Caco-2 (cell line): ENCODE measurements at regions of chr20 and their contacts with region 1.

Region 1: GRCh38 chr20:33460711-33461110 is 17.1 kb upstream of the SNTA1 start:
- DNase-seq: no peak
- H3K4me3 ChIP-seq: no peak overlapping the region
- H3K4me3 Mint-ChIP-seq: no peak overlapping the region
- H3K27ac Mint-ChIP-seq: no peak overlapping the region
- H3K4me1 ChIP-seq: no peaks in the 10 kb centered on the region; the same call in 1 of the 2 replicates
- H3K4me1 Mint-ChIP-seq: no peaks in the 10 kb centered on the region
- H3K27me3 ChIP-seq: no peaks in the 10 kb centered on the region
- H3K27me3 Mint-ChIP-seq: no peaks in the 10 kb centered on the region
- CTCF ChIP-seq: no peak

Region 2: GRCh38 chr20:33217052-33217451 is 243.7 kb before region 1 on chr20 and contains the start of gene BPIFA3:
- CTCF ChIA-PET with region 1: no interaction called
- POLR2A ChIA-PET with region 1: no interaction called
- intact Hi-C with region 1: no loop called
- DNase-seq: no peak
- H3K4me3 ChIP-seq: no peak within 1 kb of the TSS
- H3K4me3 Mint-ChIP-seq: no peak within 1 kb of the TSS
- H3K27ac Mint-ChIP-seq: no peak within 1 kb of the TSS
- H3K4me1 ChIP-seq: no peaks in the 10 kb centered on the region
- H3K4me1 Mint-ChIP-seq: no peaks in the 10 kb centered on the region
- H3K27me3 ChIP-seq: no peaks in the 10 kb centered on the region; the same call in none of the 2 replicates
- H3K27me3 Mint-ChIP-seq: peaks cover 25% of the 10 kb centered on the region
- CTCF ChIP-seq: no peak
- total RNA-seq, gene BPIFA3: not detected in 2 replicates

Region 3: GRCh38 chr20:33489495-33490022 is 28.8 kb after region 1 on chr20:
- CTCF ChIA-PET with region 1: interaction called, 19 read pairs
- POLR2A ChIA-PET with region 1: interaction called, 6 read pairs
- intact Hi-C with region 1: no loop called
- DNase-seq: peak; percentile 100
- H3K4me3 ChIP-seq: peak overlapping the region; percentile 16
- H3K4me3 Mint-ChIP-seq: peak overlapping the region; percentile 92
- H3K27ac Mint-ChIP-seq: peak overlapping the region; percentile 38
- H3K4me1 ChIP-seq: peaks cover 14% of the 10 kb centered on the region
- H3K4me1 Mint-ChIP-seq: peaks cover 8% of the 10 kb centered on the region
- H3K27me3 ChIP-seq: no peaks in the 10 kb centered on the region
- H3K27me3 Mint-ChIP-seq: no peaks in the 10 kb centered on the region
- CTCF ChIP-seq: no peak

Region 4: GRCh38 chr20:33515569-33516216 is 55.0 kb after region 1 on chr20:
- CTCF ChIA-PET with region 1: interaction called, 4 read pairs
- POLR2A ChIA-PET with region 1: no interaction called
- intact Hi-C with region 1: loop called (anchors 1 kb)
- DNase-seq: no peak
- H3K4me3 ChIP-seq: no peak overlapping the region
- H3K4me3 Mint-ChIP-seq: no peak overlapping the region
- H3K27ac Mint-ChIP-seq: no peak overlapping the region
- H3K4me1 ChIP-seq: peaks cover 13% of the 10 kb centered on the region
- H3K4me1 Mint-ChIP-seq: peaks cover 17% of the 10 kb centered on the region
- H3K27me3 ChIP-seq: no peaks in the 10 kb centered on the region
- H3K27me3 Mint-ChIP-seq: no peaks in the 10 kb centered on the region
- CTCF ChIP-seq: peak; percentile 50 to 66

Region 5: GRCh38 chr20:33531047-33531877 is 70.6 kb after region 1 on chr20:
- CTCF ChIA-PET with region 1: interaction called, 3 read pairs
- POLR2A ChIA-PET with region 1: no interaction called
- intact Hi-C with region 1: loop called (anchors 1 kb)
- DNase-seq: no peak
- H3K4me3 ChIP-seq: no peak overlapping the region
- H3K4me3 Mint-ChIP-seq: no peak overlapping the region
- H3K27ac Mint-ChIP-seq: no peak overlapping the region
- H3K4me1 ChIP-seq: no peaks in the 10 kb centered on the region
- H3K4me1 Mint-ChIP-seq: peaks cover 25% of the 10 kb centered on the region
- H3K27me3 ChIP-seq: no peaks in the 10 kb centered on the region
- H3K27me3 Mint-ChIP-seq: no peaks in the 10 kb centered on the region
- CTCF ChIP-seq: no peak

Region 6: DNA sequence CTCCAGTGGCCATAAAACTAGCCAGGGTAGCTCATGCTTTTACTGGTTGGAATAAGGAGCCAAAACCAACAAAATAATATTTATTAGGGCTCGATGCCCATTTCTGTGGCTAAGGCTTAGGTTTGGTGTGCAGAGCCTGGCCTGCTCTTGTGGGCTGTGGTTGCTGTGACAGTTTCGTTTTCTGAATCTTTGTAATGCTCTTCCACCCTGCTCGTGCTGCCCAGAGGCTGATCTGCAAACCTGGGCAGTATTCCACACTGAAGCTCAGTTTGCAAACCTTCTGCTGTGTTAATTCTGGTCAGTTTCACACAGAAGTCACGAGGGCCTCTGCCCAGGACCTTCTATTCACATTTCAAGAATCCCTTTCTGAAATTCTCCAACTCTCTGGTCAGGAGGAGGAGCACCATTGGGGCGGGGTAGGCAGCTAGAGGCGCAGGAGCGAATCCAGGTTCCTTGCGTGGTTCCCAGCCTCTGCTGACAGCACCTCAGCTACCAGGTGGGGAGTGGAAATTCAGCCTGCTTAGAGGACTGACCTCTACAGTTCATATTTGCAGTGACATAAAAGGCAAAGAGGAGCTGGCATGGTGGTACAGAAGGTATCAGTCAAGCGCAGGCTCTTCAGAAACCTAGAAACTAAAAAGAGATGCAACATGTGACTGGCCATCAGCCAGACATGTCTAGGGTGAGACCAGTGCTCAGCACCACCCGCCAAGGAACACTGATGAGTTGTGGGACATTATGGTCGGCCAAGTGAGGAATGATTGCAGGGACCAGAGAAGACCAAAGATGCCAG is 187.1 kb after region 1 on chr20:
- CTCF ChIA-PET with region 1: interaction called, 72 read pairs
- POLR2A ChIA-PET with region 1: interaction called, 4 read pairs
- intact Hi-C with region 1: no loop called
- DNase-seq: peak in 1 of 2 experiments; percentile 37
- H3K4me3 ChIP-seq: no peak overlapping the region
- H3K4me3 Mint-ChIP-seq: no peak overlapping the region
- H3K27ac Mint-ChIP-seq: peak overlapping the region; percentile 17
- H3K4me1 ChIP-seq: peaks cover 2% of the 10 kb centered on the region; the same call in 1 of the 2 replicates
- H3K4me1 Mint-ChIP-seq: no peaks in the 10 kb centered on the region
- H3K27me3 ChIP-seq: no peaks in the 10 kb centered on the region
- H3K27me3 Mint-ChIP-seq: no peaks in the 10 kb centered on the region
- CTCF ChIP-seq: no peak